Posterior cingulate gyrus (tissue), 11 donors: ENCODE measurements at regions of chr14 and their contacts with region 1.

Region 1: GRCh38 chr14:88168498-88169165 is 154.4 kb downstream of the KCNK10 start:
- DNase-seq: peak in 2 of 10 donors; percentile 13 to 63

Region 2: DNA sequence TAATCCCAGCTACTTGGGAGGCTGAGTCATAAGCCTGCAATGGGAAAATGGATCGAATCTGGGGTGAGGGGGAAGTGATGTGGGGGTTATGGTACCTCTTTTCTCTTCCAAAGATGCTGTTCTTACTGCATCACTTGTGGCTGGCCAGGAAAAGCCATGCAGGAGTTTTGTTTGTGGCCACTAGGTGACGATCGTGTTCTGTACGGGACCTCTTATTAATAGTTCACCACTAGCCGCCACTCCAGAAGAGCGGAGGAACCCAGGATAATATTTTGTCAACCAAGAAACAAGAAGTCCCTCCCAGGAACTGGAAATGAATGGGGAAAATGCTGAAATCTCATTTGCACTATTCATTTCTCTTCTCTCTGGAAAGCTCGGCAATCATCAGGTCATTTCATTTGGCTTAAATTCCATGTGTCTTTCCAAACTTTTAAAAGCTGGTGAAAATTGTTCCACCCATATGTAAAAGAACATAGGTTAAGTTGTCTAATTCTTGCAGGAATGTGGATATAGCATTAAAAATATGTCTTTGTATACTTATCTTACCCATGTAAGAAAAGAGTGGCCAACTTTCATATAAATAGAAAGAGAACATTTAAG is 154.8 kb before region 1 on chr14:
- intact Hi-C with region 1: loop called (anchors 5 kb)
- DNase-seq: peak; percentile 34 to 95 (median 67)

Region 3: DNA sequence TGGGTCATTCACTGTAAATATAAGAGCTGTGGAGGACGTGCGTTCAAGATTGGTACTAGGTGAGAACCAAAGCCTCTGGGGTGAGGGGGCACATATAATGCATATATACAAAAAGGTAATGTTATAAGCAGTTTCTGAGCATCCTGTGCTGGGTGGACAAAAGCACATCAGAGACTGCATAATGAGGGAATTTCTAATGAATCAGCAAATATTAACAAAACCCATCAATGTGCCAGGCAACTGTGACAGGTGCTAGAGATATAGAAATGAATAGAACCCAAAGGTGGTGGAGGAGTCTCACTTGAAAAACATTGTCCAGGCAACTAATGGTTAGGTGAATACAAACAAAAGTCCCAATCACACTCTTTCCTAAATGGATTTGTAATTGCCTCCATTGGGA is 89.0 kb before region 1 on chr14:
- intact Hi-C with region 1: no loop called
- DNase-seq: no peak